ENCODE measurements at regions of chr9 and their contacts with region 1.

Region 1: GRCh38 chr9:109411798-109412352 is 86.2 kb downstream of the PTPN3 start:
- DNase-seq: peak; percentile 79
- H3K4me3 Mint-ChIP-seq: peak overlapping the region; percentile 6
- H3K27ac Mint-ChIP-seq: peak overlapping the region; percentile 90
- H3K4me1 Mint-ChIP-seq: peaks cover 46% of the 10 kb centered on the region
- H3K27me3 Mint-ChIP-seq: no peaks in the 10 kb centered on the region

Region 2: GRCh38 chr9:109101810-109102209 is 310.1 kb before region 1 on chr9:
- intact Hi-C with region 1: loop called (anchors 5 kb)
- DNase-seq: peak; percentile 75
- H3K4me3 Mint-ChIP-seq: peak overlapping the region; percentile 69
- H3K27ac Mint-ChIP-seq: peak overlapping the region; percentile 89
- H3K4me1 Mint-ChIP-seq: peaks cover 53% of the 10 kb centered on the region
- H3K27me3 Mint-ChIP-seq: no peaks in the 10 kb centered on the region

Region 3: DNA sequence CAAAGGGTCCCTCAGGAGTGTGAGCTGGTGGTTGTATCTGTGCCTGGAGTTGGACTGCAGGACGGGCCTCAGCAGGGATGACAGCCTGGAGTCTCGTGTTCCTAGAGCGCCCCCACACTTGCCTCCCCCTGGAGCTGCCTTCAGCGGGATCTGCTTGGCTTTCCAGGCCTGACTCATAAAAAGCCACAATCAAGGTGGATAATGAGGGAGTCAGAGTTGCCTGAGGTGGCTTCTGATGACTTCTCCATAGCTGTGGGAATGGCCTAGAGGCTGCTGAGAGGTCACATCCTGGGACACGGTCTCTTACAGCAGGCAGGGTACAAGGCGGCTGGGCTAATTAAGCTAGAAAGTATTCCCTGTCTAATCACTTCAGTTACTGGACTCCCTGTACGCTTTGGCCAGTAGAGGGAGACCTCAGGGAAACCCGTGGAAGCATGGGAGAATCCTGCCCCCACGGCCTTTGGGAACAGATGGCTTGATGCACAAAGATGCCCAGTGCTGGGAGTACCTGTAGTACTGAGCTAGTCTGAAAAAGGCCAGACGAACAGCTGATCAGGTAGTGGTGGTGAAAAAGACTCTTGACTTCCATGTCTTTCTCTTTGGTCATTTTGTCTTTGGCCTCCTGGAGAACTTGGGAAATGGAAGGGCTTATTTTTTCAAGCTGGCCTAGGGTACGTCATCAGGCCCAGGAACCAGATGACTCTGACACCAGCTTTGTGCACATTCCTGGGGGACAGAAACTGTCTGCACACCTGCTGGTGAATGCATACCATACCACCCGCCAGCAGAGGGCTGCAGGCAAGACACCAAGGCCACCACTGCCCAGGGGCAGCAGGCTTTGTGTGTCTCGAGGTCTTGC is 228.7 kb before region 1 on chr9:
- intact Hi-C with region 1: loop called (anchors 5 kb)
- DNase-seq: peak; percentile 68
- H3K4me3 Mint-ChIP-seq: no peak overlapping the region
- H3K27ac Mint-ChIP-seq: no peak overlapping the region
- H3K4me1 Mint-ChIP-seq: peaks cover 13% of the 10 kb centered on the region
- H3K27me3 Mint-ChIP-seq: peaks cover 28% of the 10 kb centered on the region

Region 4: DNA sequence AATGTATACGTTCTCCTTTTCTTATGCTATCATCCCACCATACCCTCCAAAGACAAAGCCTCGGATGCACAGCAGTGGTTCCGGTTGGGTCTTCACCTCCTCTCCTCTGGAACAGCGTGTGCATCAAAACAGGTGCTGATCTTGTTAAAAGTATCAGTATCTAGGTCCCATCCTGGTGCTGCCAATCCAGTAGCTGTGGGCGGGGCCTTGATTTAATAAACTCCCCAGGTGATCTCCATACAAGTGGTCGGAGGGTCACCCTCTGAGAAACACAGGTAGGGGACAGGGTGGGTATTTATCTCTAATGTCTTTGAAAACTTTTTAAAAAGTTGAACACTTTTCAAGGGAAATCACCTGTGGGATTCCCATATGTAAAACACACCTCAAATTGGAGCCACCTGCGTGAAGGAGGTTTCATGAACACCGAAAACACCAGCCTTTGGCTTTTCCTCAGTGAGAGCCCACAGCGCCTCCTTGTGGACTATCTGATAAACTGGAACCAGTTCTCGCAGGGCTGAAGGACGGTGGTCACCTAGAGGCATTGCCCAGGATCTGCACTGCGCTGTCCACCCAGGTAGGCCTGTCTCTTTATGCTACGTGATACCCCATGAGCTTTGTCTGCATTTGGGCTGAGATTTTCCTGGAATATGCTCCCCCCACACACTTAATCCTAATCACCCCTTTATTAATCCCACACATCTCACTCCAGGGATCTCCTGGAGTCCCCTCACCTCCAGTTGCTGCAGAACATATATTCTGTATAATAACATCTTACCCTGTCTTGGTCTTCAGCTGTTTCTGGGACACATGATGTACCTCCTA is 10.5 kb before region 1 on chr9:
- intact Hi-C with region 1: loop called (anchors 1 kb)
- DNase-seq: peak; percentile 83
- H3K4me3 Mint-ChIP-seq: peak overlapping the region; percentile 9
- H3K27ac Mint-ChIP-seq: peak overlapping the region; percentile 82
- H3K4me1 Mint-ChIP-seq: peaks cover 15% of the 10 kb centered on the region
- H3K27me3 Mint-ChIP-seq: peaks cover 12% of the 10 kb centered on the region

Region 5: DNA sequence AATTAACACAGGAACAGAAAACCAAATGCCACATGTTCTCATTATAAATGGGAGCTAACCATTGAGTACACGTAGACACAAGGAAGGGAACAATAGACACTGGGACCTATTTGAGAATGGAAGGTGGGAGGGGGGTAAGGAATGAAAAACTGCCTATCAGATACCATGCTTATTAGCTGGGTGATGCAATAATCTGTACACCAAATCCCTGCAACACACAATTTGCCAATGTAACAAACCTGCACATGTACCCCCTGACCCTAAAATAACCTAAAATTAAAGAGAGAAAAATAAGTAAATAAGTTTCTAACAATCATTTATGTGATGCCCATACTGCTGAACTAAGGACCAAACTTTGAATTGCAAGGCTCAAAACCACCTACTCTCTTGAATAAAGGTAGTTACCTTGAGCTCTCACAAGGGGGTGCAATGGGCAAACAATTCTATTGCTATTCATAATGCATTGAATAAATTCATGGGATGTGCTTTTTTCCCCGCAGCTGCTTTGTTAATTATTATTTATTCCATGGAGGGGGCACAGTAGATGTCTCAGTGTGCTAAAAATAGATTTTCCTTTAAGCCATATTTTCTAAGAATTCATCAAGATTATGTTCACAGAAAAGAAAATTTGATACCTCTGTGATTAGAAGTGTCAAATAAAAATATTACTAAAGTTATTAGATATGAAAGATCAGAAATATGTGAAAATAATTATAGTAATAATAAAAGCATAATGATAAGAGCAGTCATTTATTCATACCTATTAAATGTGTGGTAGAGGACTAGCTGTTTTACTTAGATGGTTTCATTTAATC is 162.4 kb after region 1 on chr9:
- intact Hi-C with region 1: no loop called
- DNase-seq: peak; percentile 79
- H3K4me3 Mint-ChIP-seq: no peak overlapping the region
- H3K27ac Mint-ChIP-seq: no peak overlapping the region
- H3K4me1 Mint-ChIP-seq: no peaks in the 10 kb centered on the region
- H3K27me3 Mint-ChIP-seq: peaks cover 30% of the 10 kb centered on the region

Measured in activated CD4-positive, alpha-beta T cell treated with anti-CD3 and anti-CD28 coated beads, Interleukin-2, amount 10 ng/mL, durations not matched to agents 24 days and 14 days (primary cell).